Aorta (tissue), 5 donors: ENCODE measurements at regions of chr2 and their contacts with region 1.

Region 1: GRCh38 chr2:32772638-32773447 is 145.0 kb downstream of the TTC27 start:
- DNase-seq: no peak
- ATAC-seq: peak; percentile 54
- H3K4me3 ChIP-seq: no peak overlapping the region
- H3K27ac ChIP-seq: no peak overlapping the region
- H3K4me1 ChIP-seq: no peaks in the 10 kb centered on the region
- H3K27me3 ChIP-seq: no peaks in the 10 kb centered on the region

Region 2: DNA sequence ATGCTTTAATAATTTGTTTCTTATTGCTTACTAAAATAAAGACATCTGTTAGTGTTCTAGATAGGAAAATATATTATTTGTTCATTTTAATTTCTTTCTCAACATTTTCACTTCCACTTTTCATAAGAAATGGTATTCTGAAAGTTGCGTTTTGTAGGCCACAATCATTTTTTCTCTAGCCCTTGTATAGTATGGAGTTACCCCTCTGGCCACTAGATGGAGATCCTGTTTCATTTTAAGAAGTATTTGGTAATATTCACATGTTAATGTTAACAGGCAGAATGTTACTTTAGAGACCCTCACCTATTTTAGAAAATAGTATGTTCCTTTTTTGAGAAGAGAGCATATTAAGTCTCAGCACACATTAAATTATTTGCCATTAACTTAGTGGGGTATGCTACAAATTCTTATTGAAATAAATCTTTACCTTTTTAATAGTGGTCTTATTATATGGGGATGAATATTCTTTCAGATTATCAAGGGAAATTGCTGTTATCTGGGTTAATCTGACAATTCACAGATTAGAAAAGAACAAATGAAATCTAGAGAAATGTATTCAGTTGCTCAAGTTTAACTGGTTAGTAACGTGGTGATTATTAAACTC is 218.9 kb before region 1 on chr2:
- intact Hi-C with region 1: loop called in 1 of 2 experiments (anchors 5 kb)
- DNase-seq: no peak
- ATAC-seq: peak; percentile 76
- H3K4me3 ChIP-seq: no peak overlapping the region
- H3K27ac ChIP-seq: no peak overlapping the region
- H3K4me1 ChIP-seq: no peaks in the 10 kb centered on the region
- H3K27me3 ChIP-seq: no peaks in the 10 kb centered on the region

Region 3: DNA sequence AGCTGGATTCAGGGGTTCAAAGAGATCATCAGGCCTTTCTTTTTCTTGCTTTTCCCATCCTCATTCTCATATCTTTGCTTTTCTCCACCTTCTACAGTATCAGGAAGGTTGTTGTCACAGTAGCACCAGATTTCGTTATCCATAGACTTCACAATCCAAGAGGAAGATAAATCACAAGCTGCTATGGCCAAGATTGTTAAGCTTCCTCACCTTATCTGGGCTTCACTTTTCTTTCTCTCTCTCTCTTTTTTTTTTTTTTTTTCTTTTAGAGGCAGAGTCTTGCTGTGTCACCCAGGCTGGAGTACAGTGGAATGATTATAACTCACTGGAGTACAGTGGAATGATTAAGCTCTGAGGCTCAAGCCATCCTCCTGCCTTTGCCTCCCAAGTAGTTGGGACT is 51.5 kb before region 1 on chr2:
- intact Hi-C with region 1: no loop called
- DNase-seq: no peak
- ATAC-seq: no peak
- H3K4me3 ChIP-seq: no peak overlapping the region
- H3K27ac ChIP-seq: no peak overlapping the region
- H3K4me1 ChIP-seq: peaks cover 4 to 15% of the 10 kb centered on the region in 2 donors
- H3K27me3 ChIP-seq: no peaks in the 10 kb centered on the region

Region 4: DNA sequence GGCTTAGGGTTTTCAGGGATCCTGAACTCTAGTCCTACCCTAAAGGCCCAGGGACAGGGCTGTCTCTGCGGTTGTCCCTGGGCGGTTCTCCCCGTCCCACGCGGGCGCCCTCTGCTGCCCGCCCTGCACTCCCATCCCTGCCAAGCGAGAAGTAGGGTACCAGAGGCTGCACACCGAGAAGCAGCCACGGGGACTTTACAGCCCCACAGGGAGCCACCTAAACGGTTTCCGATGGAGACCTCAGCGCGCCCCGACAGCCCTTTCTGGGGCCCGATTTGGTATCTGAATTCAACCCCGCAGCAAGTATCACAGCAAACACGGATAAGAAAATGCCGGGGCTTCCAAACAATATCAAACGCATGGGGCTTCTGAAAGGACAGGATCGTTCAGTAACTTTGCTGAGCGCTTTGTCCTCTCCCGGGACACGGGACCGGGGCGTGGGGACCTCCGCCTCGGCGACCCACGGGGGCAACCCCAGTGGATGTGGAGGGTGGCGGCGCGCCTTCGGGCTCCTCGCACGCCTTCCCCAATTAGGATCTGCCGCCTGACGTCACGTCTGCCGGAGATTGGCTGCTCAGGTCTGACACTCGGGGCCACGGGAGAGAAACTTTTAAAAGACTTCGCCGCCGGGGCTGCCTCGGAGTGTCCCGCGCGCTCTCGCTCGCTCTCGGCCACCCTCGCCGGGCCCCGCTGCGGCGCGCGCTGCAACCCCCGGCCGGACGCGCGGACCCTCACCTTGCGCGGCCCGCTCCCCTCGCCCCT is 173.7 kb after region 1 on chr2 and contains the start of gene LTBP1:
- intact Hi-C with region 1: loop called in 1 of 2 experiments (anchors 5 kb)
- DNase-seq: peak; percentile 81 to 92
- ATAC-seq: peak; percentile 88
- H3K4me3 ChIP-seq: peak within 1 kb of the TSS; percentile 84 to 96
- H3K27ac ChIP-seq: peak within 1 kb of the TSS; percentile 30 to 36
- H3K4me1 ChIP-seq: no peaks in the 10 kb centered on the region
- H3K27me3 ChIP-seq: no peaks in the 10 kb centered on the region
- total RNA-seq, gene LTBP1: 551 to 573 TPM

Region 5: DNA sequence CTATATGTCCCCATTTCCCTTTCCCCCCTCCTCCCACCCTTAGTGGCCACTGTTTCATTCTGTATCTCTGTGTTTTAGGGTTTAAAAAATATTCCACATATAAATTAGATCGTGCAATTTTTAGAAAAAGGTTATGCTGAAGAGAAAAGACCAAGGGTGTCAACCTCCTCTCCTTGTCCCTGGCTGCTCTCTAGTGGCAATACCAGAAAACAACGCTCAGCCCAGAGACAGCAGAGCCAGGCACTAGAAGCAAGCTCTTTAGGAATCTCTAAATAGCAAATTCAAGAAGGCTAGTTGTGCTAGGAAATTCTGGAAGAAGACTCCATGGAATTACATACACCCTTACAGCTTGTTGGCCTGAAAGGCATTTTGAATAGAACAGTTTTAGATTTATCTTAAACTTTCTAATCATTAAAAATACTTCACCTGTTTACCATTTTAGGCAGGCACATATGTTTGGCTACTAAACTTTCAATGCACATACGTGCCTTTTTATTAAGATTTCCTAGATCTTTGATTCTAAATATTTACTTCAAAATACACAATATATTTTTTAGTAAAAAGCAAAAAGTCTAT is 668.5 kb after region 1 on chr2:
- intact Hi-C with region 1: loop called in 1 of 2 experiments (anchors 10 kb)
- DNase-seq: peak in 1 of 2 donors; percentile 60
- ATAC-seq: peak; percentile 86
- H3K4me3 ChIP-seq: no peak overlapping the region
- H3K27ac ChIP-seq: no peak overlapping the region
- H3K4me1 ChIP-seq: no peaks in the 10 kb centered on the region
- H3K27me3 ChIP-seq: no peaks in the 10 kb centered on the region

Region 6: DNA sequence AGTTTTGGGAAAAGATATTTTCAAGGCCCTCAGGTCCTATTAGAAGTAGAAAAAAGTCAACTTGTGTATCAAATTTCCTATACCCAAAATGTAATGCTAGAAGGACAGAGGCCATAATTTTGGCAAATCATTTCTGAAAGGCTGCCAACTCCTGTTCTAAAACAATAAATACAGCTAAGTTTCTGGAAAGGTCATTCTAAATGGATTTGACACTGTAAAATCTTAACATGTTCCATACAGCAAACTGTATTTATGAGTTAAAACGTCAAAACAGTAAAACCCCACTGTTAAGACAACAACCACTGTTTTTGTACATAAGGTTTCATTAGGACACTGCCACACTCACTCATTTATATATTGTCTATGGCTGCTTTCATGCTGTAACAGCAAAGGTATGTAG is 816.6 kb after region 1 on chr2:
- intact Hi-C with region 1: loop called in 1 of 2 experiments (anchors 5 kb)
- DNase-seq: no peak
- ATAC-seq: no peak
- H3K4me3 ChIP-seq: no peak overlapping the region
- H3K27ac ChIP-seq: no peak overlapping the region
- H3K4me1 ChIP-seq: peaks cover 0 to 7% of the 10 kb centered on the region in 2 donors
- H3K27me3 ChIP-seq: no peaks in the 10 kb centered on the region